ENCODE measurements at regions of chr12 and their contacts with region 1.

Region 1: GRCh38 chr12:34292736-34293625 is 270.7 kb downstream of the ALG10 start:
- DNase-seq: peak; percentile 5

Region 2: GRCh38 chr12:34097213-34097612 is 195.8 kb before region 1 on chr12:
- in situ Hi-C with region 1: no loop called
- DNase-seq: peak; percentile 66

Region 3: DNA sequence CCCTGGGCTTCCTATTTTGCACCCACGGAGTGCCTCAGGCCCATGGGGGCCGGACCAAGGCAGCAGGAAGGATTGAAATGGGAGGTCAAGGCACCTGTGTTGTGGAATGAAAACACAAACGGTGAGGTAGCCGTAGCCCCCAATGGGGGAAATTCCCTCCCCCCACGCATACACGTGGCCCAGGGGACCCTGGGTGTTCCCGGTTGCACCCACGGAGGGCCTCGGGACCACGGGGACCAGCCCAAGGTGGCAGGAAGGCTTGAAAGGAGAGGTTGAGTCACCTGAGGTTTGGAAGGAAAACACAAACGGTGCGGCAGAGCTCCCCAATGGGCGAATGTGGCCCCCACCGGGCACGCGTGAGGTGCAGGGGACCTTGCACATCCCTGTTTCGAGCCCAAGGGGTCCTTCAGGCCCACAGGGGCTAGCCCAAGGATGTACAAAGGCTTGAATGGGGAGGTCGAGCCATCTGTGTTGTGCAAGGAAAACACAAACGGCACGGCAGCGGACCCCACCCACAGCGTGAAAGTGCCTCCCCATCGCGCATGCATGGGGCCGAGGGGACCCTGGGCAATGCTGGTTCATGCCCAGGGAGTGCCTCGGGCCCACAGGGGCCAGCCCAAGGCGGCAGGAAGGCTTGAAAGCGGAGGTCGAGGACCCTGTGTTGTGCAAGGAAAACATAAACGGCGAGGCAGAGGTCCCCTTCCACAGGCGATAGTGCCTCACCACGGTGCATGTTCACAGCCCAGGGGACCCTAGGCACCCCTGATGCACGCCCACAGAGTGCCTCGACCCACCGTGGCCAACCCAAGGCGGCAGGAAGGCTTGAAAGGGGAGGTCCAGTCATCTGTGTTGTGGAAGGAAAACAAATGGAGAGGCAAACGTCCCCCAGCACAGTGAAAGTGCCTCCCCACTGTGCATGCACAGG is 106.0 kb after region 1 on chr12:
- in situ Hi-C with region 1: loop called (anchors 25 kb)
- DNase-seq: no peak

Measured in KBM-7 (cell line).